ENCODE measurements at regions of chr10 and their contacts with region 1.

Region 1: GRCh38 chr10:92573798-92574547 is at the start of gene IDE:
- DNase-seq: peak; percentile 89
- ATAC-seq: peak; percentile 83
- H3K4me3 Mint-ChIP-seq: peak within 1 kb of the TSS; percentile 60
- H3K27ac Mint-ChIP-seq: peak within 1 kb of the TSS; percentile 84
- H3K4me1 Mint-ChIP-seq: peaks cover 17% of the 10 kb centered on the region
- H3K27me3 Mint-ChIP-seq: peaks cover 2% of the 10 kb centered on the region
- total RNA-seq, gene IDE: 17.9 to 18.2 TPM

Region 2: GRCh38 chr10:92517034-92517655 is 56.8 kb before region 1 on chr10:
- POLR2A ChIA-PET with region 1: interaction called, 13 read pairs
- DNase-seq: no peak
- ATAC-seq: peak; percentile 94
- H3K4me3 Mint-ChIP-seq: no peak overlapping the region
- H3K27ac Mint-ChIP-seq: no peak overlapping the region
- H3K4me1 Mint-ChIP-seq: peaks cover 6% of the 10 kb centered on the region
- H3K27me3 Mint-ChIP-seq: no peaks in the 10 kb centered on the region

Measured in activated naive CD8-positive, alpha-beta T cell treated with anti-CD3 and anti-CD28 coated beads, Interleukin-2, amount 10 ng/mL, durations not matched to agents 7 days and 5 days (primary cell).